ENCODE measurements at regions of chr3 and their contacts with region 1.

Region 1: GRCh38 chr3:110006913-110007312 is 669.6 kb upstream of the DPPA4 start:
- DNase-seq: no peak

Region 2: GRCh38 chr3:110459021-110459420 is 452.1 kb after region 1 on chr3:
- intact Hi-C with region 1: loop called (anchors 10 kb)
- DNase-seq: no peak